ENCODE measurements at regions of chr9 and their contacts with region 1.

Region 1: DNA sequence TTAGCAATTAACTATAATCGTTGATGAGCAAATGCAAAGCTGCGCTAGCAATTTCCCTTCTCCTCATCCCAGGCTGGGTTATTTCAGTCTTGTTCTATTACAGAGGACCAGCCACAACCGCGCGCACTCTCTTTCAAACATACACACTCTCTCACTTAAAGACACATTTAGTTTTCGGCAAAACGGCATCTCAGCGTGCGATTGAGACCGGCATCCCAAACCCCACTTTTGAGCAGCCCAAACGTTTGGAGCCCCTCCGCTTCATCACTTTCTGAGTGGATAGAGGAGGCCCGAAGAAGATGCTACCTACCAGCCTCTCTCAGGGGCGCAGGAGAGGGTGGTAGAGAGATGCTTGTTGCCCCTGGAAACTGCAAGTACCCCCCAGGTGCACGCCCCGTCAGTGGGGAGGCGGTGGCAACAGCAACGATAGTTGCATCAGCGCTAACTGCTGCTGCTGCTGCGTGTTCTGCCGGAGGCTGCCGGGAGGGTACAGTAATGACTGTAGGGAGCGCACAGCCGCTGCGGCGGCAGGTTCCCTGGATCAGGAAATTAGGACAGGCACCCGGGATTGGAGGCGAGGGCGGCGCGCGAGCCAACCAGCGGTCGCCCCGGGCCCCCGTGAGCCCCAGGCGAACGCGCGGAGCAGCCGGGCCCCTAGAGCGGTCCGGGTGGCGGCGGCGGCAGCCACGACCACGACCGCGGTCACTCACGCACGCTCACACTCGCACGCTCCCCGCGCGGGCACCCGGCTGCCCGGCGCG is 488 bp upstream of the VLDLR start:
- DNase-seq: peak; percentile 77 to 78
- ATAC-seq: peak; percentile 68 to 82 (median 80)
- H3K4me3 ChIP-seq: peak overlapping the region; percentile 56 to 90 (median 80)
- H3K27ac ChIP-seq: peak overlapping the region; percentile 88 to 97 (median 94)
- H3K4me1 ChIP-seq: peaks cover 2 to 47% (median 33%) of the 10 kb centered on the region in 9 donors
- H3K27me3 ChIP-seq: peaks cover 0 to 49% (median 0%) of the 10 kb centered on the region in 7 donors
- CTCF ChIP-seq: peak in 5 of 9 donors; percentile 14 to 44 (median 32)

Region 2: GRCh38 chr9:2241836-2242741 is 379.0 kb before region 1 on chr9:
- intact Hi-C with region 1: loop called in 1 of 10 experiments (anchors 10 kb)
- DNase-seq: peak; percentile 79 to 82
- ATAC-seq: peak; percentile 89 to 97 (median 96)
- H3K4me3 ChIP-seq: peak overlapping the region; percentile 7 to 68 (median 54)
- H3K27ac ChIP-seq: peak overlapping the region in 9 of 10 donors; percentile 54 to 80 (median 67)
- H3K4me1 ChIP-seq: peaks cover 0 to 23% (median 14%) of the 10 kb centered on the region in 9 donors
- H3K27me3 ChIP-seq: no peaks in the 10 kb centered on the region
- CTCF ChIP-seq: peak in 2 of 9 donors; percentile 3 to 24

Region 3: GRCh38 chr9:2494562-2494961 is 126.5 kb before region 1 on chr9:
- intact Hi-C with region 1: loop called in 4 of 10 experiments (anchors 5 to 10 kb)
- DNase-seq: no peak
- ATAC-seq: peak in 2 of 8 donors; percentile 27 to 57
- H3K4me3 ChIP-seq: no peak overlapping the region
- H3K27ac ChIP-seq: peak overlapping the region in 7 of 10 donors; percentile 5 to 84 (median 64)
- H3K4me1 ChIP-seq: peaks cover 2 to 65% (median 29%) of the 10 kb centered on the region in 9 donors
- H3K27me3 ChIP-seq: no peaks in the 10 kb centered on the region
- CTCF ChIP-seq: no peak

Region 4: DNA sequence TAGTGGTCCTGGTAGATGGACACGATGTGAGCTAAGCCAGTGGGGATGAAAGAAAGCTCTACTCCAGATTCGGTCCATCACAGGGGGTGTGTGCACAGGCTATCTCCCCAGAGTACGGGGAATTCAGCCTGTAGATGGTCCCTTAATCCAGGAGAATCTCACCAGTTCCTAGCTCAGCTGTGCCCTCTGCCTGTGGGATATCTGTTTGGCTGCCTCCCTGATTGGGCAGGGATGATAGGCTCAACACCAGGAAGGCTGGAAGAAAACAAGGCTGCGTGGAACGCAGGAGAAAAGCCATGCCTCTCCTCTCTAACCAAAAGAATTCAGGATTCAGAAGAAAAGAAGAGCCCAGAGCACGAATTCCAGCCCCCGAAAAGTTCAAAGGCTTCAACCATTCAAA is 41.4 kb after region 1 on chr9:
- intact Hi-C with region 1: loop called in 1 of 10 experiments (anchors 5 kb)
- DNase-seq: no peak
- ATAC-seq: peak in 3 of 8 donors; percentile 27 to 38 (median 38)
- H3K4me3 ChIP-seq: no peak overlapping the region
- H3K27ac ChIP-seq: peak overlapping the region in 9 of 10 donors; percentile 56 to 88 (median 73)
- H3K4me1 ChIP-seq: peaks cover 6 to 43% (median 35%) of the 10 kb centered on the region in 9 donors
- H3K27me3 ChIP-seq: no peaks in the 10 kb centered on the region
- CTCF ChIP-seq: peak in 3 of 9 donors; percentile 10 to 23 (median 17)

Region 5: DNA sequence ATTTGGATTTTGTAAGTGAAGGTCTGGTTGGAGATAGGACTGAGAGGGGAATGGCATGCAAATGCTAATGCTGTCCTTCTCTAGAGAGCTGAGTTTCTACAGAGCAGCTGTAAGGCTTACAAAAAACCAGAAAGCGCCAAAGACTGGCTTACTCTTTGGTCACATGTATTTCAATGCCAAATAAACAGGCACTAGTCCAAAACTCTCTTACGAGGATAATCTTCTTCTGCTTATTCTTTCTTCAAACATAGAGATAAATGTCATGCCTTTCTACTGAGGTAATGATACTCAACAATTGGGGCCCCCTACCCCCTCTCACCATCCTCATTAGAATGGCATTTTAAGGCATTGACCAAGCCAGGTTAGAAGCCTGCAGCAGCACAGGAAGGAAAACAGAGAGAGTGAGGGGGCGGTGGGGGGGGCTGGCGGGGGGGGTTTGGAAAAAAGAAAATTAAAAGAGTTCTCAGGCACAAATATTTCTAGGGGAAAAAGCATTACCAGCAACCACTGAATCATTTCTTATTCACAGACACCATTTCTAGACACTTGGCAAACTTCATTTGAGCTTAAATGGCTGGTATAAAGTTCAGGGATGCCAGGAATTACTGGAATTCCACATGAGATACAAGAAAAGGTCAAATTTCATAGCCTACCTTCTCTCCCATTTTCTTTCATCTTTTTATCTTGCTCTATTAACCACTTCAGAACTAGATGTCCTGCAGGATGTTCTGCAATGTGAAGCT is 188.8 kb after region 1 on chr9:
- intact Hi-C with region 1: loop called in 1 of 10 experiments (anchors 10 kb)
- DNase-seq: peak in 1 of 2 donors; percentile 23
- ATAC-seq: peak; percentile 65 to 90 (median 82)
- H3K4me3 ChIP-seq: peak overlapping the region in 1 of 10 donors; percentile 3
- H3K27ac ChIP-seq: peak overlapping the region in 8 of 10 donors; percentile 53 to 88 (median 70)
- H3K4me1 ChIP-seq: peaks cover 5 to 26% (median 19%) of the 10 kb centered on the region in 9 donors
- H3K27me3 ChIP-seq: no peaks in the 10 kb centered on the region
- CTCF ChIP-seq: no peak

Region 6: DNA sequence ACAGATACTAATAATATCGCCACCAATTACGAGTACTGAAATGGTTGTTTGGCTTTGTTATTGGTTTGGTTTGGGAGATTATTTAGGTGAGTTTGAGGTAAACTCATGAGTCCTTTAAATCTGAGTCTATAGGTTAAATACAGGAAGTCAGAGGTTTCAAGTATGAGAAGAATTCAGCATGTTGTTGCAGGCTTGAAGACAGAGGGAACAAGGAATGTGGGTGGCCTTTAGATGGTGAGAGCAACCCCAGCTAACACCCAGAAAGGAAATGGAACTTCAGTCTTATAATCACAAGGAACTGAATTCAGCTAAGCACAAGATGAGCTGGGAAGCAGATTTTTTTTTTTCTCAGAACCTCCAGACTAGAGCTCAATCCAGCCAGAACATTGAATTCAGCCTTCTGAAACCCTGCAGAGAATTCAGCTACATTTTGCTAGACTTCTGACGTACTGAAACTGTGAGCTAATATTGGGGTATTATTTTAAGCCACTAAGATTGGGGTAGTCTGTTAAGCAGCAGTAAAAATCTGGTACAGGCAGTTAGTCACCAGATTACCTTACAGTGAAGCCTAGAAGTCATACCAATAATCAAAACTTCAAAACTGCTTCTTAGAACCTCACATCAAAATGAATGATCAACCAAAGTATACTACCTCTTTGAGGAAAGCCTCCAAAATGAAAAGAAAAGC is 438.8 kb after region 1 on chr9:
- intact Hi-C with region 1: no loop called
- DNase-seq: no peak
- ATAC-seq: no peak
- H3K4me3 ChIP-seq: no peak overlapping the region
- H3K27ac ChIP-seq: no peak overlapping the region
- H3K4me1 ChIP-seq: no peaks in the 10 kb centered on the region
- H3K27me3 ChIP-seq: no peaks in the 10 kb centered on the region
- CTCF ChIP-seq: no peak

Region 7: DNA sequence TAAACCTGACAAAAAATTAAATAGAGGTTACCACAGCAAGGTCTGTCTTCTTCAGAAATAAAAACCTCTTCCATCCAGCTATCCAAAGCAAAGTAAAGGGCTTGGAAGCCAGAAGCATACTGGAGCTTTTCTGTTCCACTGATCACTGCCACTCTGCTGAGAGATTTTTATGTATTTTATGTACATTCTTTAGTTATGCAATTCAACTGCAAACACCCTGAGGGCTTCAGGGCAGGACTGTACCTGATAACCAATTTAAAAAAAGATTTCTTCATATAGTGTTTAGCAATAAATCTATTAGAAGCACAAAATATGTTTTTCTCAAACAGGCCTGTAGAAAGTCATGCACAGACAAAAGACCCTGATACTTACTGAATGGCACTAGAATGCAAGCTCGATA is 549.7 kb after region 1 on chr9:
- intact Hi-C with region 1: no loop called
- DNase-seq: no peak
- ATAC-seq: no peak
- H3K4me3 ChIP-seq: no peak overlapping the region
- H3K27ac ChIP-seq: no peak overlapping the region
- H3K4me1 ChIP-seq: no peaks in the 10 kb centered on the region
- H3K27me3 ChIP-seq: peaks cover 0 to 15% (median 8%) of the 10 kb centered on the region in 7 donors
- CTCF ChIP-seq: no peak